ENCODE measurements at regions of chr3 and their contacts with region 1.

Region 1: DNA sequence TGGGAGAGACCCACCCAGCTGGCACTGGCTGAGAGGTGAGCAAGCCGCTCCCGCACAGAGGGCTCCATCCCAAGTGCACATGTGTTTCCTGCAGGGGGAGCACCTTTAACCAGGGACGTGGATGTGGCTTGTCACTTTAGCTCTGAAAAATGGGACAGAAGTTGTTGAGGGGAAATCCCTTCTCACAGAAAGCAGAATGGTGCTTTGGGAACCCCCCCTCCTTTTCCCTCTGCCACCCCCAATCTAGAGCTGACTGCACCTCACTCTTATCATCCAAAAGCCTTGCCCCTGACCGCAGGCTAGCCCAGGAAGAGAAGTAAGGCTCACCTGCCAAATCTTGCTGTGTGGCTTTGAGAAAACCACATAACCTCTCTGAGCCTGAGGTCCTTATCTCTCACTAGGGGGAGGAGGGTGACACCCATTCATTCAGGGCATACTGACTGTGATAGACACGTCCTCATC is 77.9 kb downstream of the RPN1 start:
- DNase-seq: no peak
- ATAC-seq: no peak

Region 2: DNA sequence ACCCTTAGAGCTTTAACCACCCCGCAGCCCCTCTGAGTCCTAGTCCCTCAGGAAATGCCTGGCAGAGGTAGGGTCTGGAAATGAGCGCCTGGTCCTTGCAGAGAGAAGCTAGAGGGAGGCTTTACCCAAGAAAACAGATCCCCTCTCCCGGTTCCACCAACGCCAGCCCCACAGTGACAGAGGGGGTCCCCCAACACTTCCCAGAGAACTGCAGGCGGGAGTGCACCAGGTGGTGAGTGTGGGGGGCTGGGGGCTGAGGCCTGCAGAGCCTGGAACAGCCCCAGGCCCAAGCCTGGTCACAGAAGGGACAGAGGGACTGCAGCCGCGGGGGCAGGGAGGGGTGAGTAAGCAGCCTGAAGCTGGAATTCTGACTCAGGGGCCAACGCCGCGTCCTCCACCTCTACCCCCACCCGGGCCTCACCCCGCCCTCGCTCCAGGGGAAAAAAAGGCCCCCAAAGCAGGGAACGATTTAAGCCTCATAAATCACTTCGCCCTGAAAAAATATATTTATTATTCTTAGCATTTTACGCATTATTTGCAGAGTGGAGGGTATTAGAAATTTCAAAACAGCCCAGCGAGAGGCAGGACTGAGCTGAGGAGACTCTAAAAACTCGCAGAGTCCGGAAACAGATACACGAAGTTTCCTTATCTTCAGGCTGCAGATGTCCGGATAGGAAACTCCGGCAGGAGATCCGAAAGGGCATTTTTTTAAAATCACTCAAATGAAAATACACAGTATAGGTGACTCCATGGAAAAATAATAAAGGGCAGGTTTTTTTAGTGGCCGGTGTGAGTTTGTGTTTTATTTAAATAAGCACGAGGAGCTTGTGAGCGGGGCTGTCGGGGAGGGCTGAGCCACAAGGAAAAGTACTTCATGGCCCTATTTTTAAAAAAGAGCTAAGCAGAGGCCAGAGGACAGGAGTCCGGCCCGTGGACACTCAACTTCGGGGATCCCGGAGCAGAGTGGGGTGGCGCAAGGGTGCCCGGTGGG is 89.7 kb before region 1 on chr3:
- intact Hi-C with region 1: loop called (anchors 5 kb)
- DNase-seq: no peak
- ATAC-seq: no peak

Region 3: DNA sequence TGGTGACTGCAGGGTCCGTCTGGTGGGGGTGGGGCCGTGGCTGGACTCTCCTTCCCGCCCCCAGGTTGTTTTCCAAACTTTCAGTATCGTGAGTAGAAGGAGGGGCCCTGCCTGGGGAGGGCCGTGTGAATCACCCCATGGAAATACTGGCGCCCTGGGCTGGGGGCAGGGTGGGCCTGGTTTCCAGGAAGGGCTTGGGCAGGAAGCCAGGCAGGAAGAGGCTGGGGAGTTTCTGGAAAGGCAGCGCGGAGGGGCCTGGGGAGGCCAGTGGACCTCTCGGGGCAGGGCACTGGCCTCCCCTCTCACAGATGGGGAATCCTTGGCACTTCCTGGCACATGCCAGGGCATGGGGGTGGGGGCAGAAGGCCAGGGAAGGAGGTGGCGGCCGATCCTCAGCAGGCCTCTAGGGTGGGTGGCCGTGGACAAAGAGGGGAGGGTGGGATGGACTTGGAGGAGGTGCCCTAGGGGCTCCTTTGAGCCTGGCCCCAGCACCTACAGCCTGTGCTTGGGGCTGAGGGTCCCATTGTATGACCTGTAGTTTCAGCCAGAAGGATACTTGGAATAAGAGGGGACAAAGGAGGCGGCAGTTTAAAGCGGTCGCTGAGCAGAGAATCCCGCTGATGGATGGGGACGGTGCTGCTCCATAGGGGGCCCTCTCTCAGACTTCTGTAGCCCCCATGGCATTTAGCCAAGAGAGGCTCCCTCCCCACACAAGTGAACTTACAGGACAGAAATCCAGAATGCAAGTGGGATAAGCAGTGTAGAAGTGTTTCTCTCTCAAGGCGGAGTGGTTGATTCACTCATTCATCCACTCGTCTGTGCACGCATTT is 23.2 kb before region 1 on chr3:
- intact Hi-C with region 1: loop called (anchors 1 kb)
- DNase-seq: no peak
- ATAC-seq: peak; percentile 51

Region 4: GRCh38 chr3:128555098-128555825 is 17.4 kb before region 1 on chr3:
- intact Hi-C with region 1: loop called (anchors 1 kb)
- DNase-seq: peak; percentile 74
- ATAC-seq: peak; percentile 53

Region 5: GRCh38 chr3:128683957-128684356 is 111.3 kb after region 1 on chr3:
- intact Hi-C with region 1: no loop called
- DNase-seq: no peak
- ATAC-seq: no peak